HepG2 (cell line): ENCODE measurements at regions of chr1 and their contacts with region 1.

Region 1: DNA sequence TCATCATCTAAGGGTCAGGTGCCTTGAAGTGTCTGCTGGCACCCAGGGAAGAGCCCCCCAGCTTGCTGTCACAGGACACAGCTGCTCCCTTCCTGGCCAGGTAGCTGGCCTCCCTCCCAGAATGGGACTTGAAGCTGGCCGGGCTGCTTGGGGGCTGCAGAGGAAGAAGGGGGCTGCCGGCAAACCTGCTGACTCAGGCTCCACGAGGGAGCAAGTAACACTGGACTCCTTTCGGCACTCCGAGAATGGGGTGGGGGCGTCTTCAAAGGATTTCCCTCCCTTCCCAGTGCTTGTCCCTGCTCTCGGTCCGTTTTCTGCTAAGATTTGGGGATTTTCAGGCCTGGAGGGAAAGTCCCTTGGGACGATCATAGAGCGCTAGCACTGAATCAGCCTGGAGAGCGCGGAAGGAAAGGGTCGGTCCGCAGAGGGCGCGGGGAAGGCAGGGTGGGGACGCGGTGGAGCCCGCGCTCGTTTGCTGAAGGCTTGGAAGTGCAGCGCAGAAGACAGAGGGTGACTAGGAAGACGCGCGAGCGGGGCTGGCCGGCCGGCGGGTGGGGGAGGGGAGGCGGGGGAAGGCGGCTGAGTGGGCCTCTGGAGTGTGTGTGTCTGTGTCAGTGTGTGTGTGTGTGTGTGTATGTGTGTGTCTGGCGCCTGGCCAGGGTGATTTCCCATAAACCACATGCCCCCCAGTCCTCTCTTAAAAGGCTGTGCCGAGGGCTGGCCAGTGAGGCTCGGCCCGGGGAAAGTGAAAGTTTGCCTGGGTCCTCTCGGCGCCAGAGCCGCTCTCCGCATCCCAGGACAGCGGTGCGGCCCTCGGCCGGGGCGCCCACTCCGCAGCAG is at the start of gene CSF1:
- DNase-seq: no peak
- ATAC-seq: peak; percentile 70
- H3K4me3 ChIP-seq: peak within 1 kb of the TSS; percentile 73 to 85 (median 81)
- H3K27ac ChIP-seq: no peak within 1 kb of the TSS
- H3K4me1 ChIP-seq: peaks cover 79% of the 10 kb centered on the region
- H3K27me3 ChIP-seq: peaks cover 3 to 45% of the 10 kb centered on the region in 2 experiments
- CTCF ChIP-seq: no peak
- EP300 ChIP-seq: no peak
- POLR2A ChIP-seq: peak in 1 of 2 experiments; percentile 43; a peak in 2 of 4 replicates
- RAD21 ChIP-seq: no peak
- total RNA-seq, gene CSF1: 1.9 and 4.6 TPM in 2 replicates

Region 2: DNA sequence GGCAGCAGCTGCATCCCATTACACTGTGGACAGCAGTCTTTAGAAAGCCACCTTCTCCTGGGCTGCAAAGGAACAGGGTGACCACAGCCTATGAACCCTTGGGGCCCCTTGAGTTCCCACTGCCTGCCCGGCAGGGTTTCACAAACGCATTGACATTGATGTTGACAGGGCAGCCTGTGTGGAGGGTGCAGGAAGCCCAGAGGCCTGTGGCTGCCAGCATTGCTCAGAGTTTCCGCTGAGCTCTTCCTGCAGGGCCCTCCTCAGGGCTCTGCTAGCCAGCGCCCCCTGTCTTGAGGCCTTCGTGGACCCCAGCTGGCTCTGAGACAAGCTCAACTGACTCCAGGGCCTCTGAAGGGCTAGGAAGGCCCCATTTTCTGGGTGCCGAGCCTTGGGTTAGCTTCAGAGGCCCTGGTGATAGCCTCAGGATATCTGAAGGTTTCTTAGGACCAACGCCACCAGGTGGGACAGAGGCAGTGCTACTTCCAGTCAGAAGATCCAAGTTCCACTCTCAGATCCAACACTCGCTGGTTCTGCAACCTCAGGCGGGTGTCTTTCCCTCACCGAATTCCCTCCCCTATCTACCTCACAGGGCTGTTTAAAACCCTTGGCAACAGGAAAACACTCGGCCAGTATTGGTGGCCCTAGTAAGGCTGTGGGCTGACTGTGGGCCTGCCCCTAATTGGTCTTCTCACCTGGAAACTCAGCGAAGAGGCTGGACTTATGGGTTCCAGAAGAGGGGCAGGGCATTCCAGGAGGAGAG is 119.4 kb before region 1 on chr1:
- CTCF ChIA-PET with region 1: no interaction called
- POLR2A ChIA-PET with region 1: no interaction called
- in situ Hi-C with region 1: no loop called
- intact Hi-C with region 1: loop called (anchors 5 kb)
- DNase-seq: peak; percentile 70
- ATAC-seq: peak; percentile 68
- H3K4me3 ChIP-seq: peak overlapping the region in 2 of 3 experiments; percentile 1 to 54; a peak in 3 of 6 replicates
- H3K27ac ChIP-seq: peak overlapping the region; percentile 60
- H3K4me1 ChIP-seq: peaks cover 82% of the 10 kb centered on the region
- H3K27me3 ChIP-seq: no peaks in the 10 kb centered on the region
- CTCF ChIP-seq: peak; percentile 81
- EP300 ChIP-seq: no peak
- POLR2A ChIP-seq: no peak
- RAD21 ChIP-seq: peak; percentile 27; the same call in 1 of the 2 replicates

Region 3: GRCh38 chr1:109864930-109865612 is 45.3 kb before region 1 on chr1:
- CTCF ChIA-PET with region 1: no interaction called
- POLR2A ChIA-PET with region 1: no interaction called
- in situ Hi-C with region 1: no loop called
- intact Hi-C with region 1: no loop called
- DNase-seq: no peak
- ATAC-seq: no peak
- H3K4me3 ChIP-seq: no peak overlapping the region
- H3K27ac ChIP-seq: no peak overlapping the region
- H3K4me1 ChIP-seq: no peaks in the 10 kb centered on the region
- H3K27me3 ChIP-seq: 0 out of 5 replicates have a peak, but pooled peaks cover 0 to 4% of the 10 kb centered on the region in 2 experiments
- CTCF ChIP-seq: no peak
- EP300 ChIP-seq: no peak
- POLR2A ChIP-seq: no peak
- RAD21 ChIP-seq: no peak

Region 4: DNA sequence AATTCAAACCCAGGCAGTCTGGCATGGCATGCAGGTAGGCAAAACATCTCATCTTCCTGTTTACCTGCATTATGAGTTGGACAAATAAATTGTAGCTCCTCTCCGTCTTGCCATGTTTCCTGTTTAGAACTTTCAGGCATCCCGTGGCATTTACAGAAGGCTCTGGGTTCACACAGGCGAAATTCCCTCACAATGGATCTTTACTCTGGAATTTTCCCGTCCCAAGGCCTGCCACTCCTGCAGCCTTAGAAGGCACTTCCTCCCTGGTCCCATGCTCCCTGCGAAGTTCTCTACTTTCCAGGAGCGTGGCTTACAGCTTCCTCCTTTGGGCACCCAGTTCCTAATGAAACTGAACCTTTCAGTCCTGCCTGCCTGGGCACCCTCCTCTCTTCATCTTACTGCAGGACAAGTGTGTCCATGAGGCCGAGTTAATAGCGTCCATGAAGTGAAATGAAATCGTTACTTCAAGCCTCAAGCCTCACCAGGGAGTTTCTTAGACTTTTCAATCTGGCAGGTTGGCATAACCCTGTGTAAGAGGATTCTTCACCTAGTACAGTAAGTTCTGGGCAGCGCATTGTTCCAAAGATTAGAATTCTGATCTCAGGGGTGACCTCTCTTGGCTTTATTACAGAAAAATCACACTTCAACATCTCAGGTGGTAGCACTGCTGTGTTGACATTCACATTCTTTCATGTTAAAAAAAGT is 37.4 kb after region 1 on chr1:
- CTCF ChIA-PET with region 1: no interaction called
- POLR2A ChIA-PET with region 1: no interaction called
- in situ Hi-C with region 1: no loop called
- intact Hi-C with region 1: no loop called
- DNase-seq: no peak
- ATAC-seq: peak; percentile 82
- H3K4me3 ChIP-seq: peak overlapping the region in 2 of 3 experiments; percentile 20 to 46; a peak in 4 of 6 replicates
- H3K27ac ChIP-seq: peak overlapping the region; percentile 62
- H3K4me1 ChIP-seq: peaks cover 38% of the 10 kb centered on the region
- H3K27me3 ChIP-seq: no peaks in the 10 kb centered on the region
- CTCF ChIP-seq: no peak
- EP300 ChIP-seq: peak in 1 of 2 experiments; percentile 39; a peak in 1 of 4 replicates
- POLR2A ChIP-seq: no peak
- RAD21 ChIP-seq: no peak